ENCODE measurements at regions of chr5 and their contacts with region 1.

Region 1: GRCh38 chr5:100430268-100431195 is 104.6 kb upstream of the FAM174A start:
- DNase-seq: no peak
- ATAC-seq: peak; percentile 34
- H3K4me3 Mint-ChIP-seq: no peak overlapping the region
- H3K27ac Mint-ChIP-seq: no peak overlapping the region
- H3K4me1 Mint-ChIP-seq: no peaks in the 10 kb centered on the region
- H3K27me3 Mint-ChIP-seq: no peaks in the 10 kb centered on the region
- CTCF ChIP-seq: peak; percentile 94

Region 2: DNA sequence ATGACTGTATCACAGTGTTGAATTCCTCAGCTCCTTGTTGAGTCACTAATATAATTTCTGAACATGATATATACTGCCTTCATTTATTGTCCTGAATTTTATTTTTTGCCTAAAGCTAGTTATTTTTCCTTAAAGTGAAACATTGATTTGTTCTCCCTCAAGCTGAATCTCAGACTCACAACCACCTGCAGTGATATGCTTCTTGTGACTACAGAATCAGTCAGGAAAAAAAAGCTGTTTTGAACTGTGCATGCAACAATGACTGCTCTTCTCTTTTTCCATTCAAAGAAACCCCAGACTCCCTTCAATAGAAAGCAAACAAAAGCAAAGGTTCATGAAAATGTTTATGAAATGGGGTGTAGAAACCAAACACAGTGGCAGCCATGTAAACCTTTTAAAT is 1031.6 kb before region 1 on chr5:
- CTCF ChIA-PET with region 1: no interaction called
- POLR2A ChIA-PET with region 1: no interaction called
- intact Hi-C with region 1: no loop called
- DNase-seq: no peak
- ATAC-seq: no peak
- H3K4me3 Mint-ChIP-seq: no peak overlapping the region
- H3K27ac Mint-ChIP-seq: no peak overlapping the region
- H3K4me1 Mint-ChIP-seq: no peaks in the 10 kb centered on the region
- H3K27me3 Mint-ChIP-seq: no peaks in the 10 kb centered on the region
- CTCF ChIP-seq: no peak

Region 3: GRCh38 chr5:100623719-100624118 is 193.2 kb after region 1 on chr5:
- CTCF ChIA-PET with region 1: interaction called, 3 read pairs
- POLR2A ChIA-PET with region 1: no interaction called
- intact Hi-C with region 1: loop called (anchors 2 kb)
- DNase-seq: no peak
- ATAC-seq: peak; percentile 68
- H3K4me3 Mint-ChIP-seq: no peak overlapping the region
- H3K27ac Mint-ChIP-seq: no peak overlapping the region
- H3K4me1 Mint-ChIP-seq: no peaks in the 10 kb centered on the region
- H3K27me3 Mint-ChIP-seq: no peaks in the 10 kb centered on the region
- CTCF ChIP-seq: no peak

Region 4: DNA sequence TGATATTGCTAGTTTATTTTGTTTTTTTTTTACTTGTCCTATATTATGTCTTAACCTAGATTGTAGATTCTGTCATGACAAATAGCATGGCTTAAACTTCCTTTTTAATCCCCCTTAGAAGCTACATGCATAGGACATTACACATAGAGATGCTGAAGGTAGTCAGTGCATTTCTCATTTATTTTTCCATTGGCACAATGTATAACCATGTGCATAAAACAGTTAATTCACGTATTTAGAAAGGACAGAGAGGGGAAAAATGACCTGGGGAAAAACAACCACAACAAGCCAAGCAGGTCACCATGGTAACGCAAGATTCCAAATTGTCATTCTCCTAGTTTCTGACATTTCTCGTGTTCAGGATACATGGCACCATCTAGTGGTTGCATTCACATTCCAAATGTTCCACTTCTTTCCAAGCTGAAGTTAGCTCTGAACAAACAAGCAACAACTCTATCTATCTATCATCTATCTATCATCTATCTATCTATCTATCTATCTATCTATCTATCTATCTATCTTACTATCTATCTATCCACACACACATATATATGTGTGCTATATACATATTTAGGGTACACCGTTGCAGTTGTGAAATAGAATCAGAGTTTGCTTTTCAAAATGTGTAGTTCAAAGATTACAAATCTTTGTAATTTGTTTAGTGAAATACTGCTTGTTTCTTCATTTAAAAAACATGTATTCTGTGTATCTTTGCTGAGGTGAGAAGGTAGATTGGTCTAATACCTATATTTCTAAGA is 959.8 kb after region 1 on chr5:
- CTCF ChIA-PET with region 1: interaction called, 24 read pairs
- POLR2A ChIA-PET with region 1: no interaction called
- intact Hi-C with region 1: loop called (anchors 1 kb)
- DNase-seq: no peak
- ATAC-seq: no peak
- H3K4me3 Mint-ChIP-seq: no peak overlapping the region
- H3K27ac Mint-ChIP-seq: no peak overlapping the region
- H3K4me1 Mint-ChIP-seq: no peaks in the 10 kb centered on the region
- H3K27me3 Mint-ChIP-seq: no peaks in the 10 kb centered on the region
- CTCF ChIP-seq: no peak

Region 5: DNA sequence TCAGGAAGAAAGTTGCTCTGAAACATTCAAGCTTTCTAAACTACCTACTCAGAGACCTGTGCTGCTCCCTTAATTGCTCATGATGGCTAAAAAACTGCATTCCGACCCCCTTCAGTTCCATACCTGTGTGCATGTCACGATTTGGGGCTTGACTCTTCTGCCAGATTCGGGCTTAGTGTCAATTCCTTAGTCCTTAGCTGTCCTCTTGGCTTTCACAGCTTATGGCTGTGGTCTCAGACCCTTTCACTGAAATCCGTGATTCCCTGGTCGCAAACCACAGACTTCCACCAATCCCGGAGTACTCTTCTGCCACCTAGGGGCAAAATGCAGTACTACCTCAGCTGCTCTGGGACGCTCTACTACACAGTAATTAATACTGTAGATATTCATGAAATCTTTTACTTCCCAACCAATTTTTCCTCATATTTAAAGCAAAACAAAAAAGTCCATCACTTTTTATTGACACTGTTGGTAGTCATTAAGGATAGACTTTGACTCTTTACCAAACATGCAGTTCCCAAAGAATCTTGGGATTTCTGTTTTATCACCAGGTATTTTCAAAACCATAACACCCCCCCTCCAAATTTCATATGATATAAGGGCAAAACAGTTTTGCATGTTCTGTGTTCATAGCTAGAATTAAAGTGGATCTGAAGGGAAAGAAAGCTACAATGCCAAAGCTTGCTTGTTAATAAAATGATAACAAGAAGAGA is 1248.1 kb after region 1 on chr5:
- CTCF ChIA-PET with region 1: no interaction called
- POLR2A ChIA-PET with region 1: no interaction called
- intact Hi-C with region 1: loop called (anchors 1 kb)
- DNase-seq: no peak
- ATAC-seq: peak; percentile 56
- H3K4me3 Mint-ChIP-seq: no peak overlapping the region
- H3K27ac Mint-ChIP-seq: no peak overlapping the region
- H3K4me1 Mint-ChIP-seq: no peaks in the 10 kb centered on the region
- H3K27me3 Mint-ChIP-seq: no peaks in the 10 kb centered on the region
- CTCF ChIP-seq: no peak

Region 6: GRCh38 chr5:102153003-102153759 is 1722.6 kb after region 1 on chr5:
- CTCF ChIA-PET with region 1: no interaction called
- POLR2A ChIA-PET with region 1: no interaction called
- intact Hi-C with region 1: loop called (anchors 2 kb)
- DNase-seq: no peak
- ATAC-seq: peak; percentile 65
- H3K4me3 Mint-ChIP-seq: no peak overlapping the region
- H3K27ac Mint-ChIP-seq: no peak overlapping the region
- H3K4me1 Mint-ChIP-seq: peaks cover 2% of the 10 kb centered on the region
- H3K27me3 Mint-ChIP-seq: no peaks in the 10 kb centered on the region
- CTCF ChIP-seq: no peak